ENCODE measurements at regions of chr17 and their contacts with region 1.

Region 1: GRCh38 chr17:3710951-3711383 is 12.7 kb upstream of the HASPIN start:
- DNase-seq: peak; percentile 83
- H3K4me3 Mint-ChIP-seq: peak overlapping the region; percentile 64
- H3K27ac Mint-ChIP-seq: peak overlapping the region; percentile 74
- H3K4me1 Mint-ChIP-seq: peaks cover 56% of the 10 kb centered on the region
- H3K27me3 Mint-ChIP-seq: no peaks in the 10 kb centered on the region

Region 2: GRCh38 chr17:3695723-3696411 is 15.1 kb before region 1 on chr17 and contains the start of gene P2RX5:
- intact Hi-C with region 1: loop called (anchors 1 kb)
- DNase-seq: peak; percentile 49
- H3K4me3 Mint-ChIP-seq: peak within 1 kb of the TSS; percentile 98
- H3K27ac Mint-ChIP-seq: peak within 1 kb of the TSS; percentile 93
- H3K4me1 Mint-ChIP-seq: peaks cover 40% of the 10 kb centered on the region
- H3K27me3 Mint-ChIP-seq: no peaks in the 10 kb centered on the region
- total RNA-seq, gene P2RX5: 133 and 143 TPM in 2 replicates